Mucosa of descending colon (tissue), 3 donors: ENCODE measurements at regions of chr2 and their contacts with region 1.

Region 1: DNA sequence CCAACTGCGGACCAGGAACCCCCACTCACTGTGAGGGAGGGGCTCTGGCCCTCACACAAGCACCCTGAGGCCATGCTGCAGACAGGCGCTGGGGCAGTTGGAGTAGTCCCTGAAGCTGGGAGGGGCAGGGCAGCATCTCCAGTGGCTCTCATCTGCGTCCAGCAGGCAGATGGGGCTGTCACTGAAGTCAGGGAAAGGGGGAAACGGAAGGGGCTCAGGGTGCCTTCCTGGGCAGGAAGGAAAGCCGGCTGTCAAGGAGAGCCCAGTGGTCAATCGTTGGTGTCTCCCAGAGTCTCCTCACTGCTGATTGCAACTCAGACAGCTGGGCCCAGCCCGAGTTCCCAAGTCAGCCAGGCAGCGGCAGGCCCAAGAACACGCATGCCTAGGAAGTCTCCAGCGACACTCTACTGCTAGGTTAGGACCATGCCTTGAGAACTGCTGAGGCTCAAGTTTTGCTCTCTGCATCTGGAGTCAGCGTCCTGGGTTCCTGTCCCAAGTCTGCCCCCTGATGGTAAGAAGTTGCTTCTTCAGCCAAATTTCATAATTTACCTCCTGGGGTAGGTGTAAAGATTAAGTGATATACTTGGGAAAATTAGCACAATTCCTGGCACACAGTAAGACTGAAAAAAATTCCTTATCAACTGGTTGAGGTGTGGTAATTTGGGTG is 27.5 kb upstream of the NMUR1 start:
- DNase-seq: peak; percentile 49 to 76 (median 60)
- ATAC-seq: peak; percentile 92
- H3K4me3 ChIP-seq: no peak overlapping the region
- H3K4me1 ChIP-seq: peaks cover 5% of the 10 kb centered on the region
- CTCF ChIP-seq: peak; percentile 66

Region 2: GRCh38 chr2:231482806-231483391 is 74.8 kb before region 1 on chr2:
- intact Hi-C with region 1: loop called in 1 of 2 experiments (anchors 5 kb)
- DNase-seq: peak; percentile 79 to 84 (median 82)
- ATAC-seq: peak; percentile 96
- H3K4me3 ChIP-seq: no peak overlapping the region
- H3K4me1 ChIP-seq: no peaks in the 10 kb centered on the region
- CTCF ChIP-seq: peak; percentile 95